Body of pancreas (tissue), 4 donors: ENCODE measurements at regions of chr2 and their contacts with region 1.

Region 1: DNA sequence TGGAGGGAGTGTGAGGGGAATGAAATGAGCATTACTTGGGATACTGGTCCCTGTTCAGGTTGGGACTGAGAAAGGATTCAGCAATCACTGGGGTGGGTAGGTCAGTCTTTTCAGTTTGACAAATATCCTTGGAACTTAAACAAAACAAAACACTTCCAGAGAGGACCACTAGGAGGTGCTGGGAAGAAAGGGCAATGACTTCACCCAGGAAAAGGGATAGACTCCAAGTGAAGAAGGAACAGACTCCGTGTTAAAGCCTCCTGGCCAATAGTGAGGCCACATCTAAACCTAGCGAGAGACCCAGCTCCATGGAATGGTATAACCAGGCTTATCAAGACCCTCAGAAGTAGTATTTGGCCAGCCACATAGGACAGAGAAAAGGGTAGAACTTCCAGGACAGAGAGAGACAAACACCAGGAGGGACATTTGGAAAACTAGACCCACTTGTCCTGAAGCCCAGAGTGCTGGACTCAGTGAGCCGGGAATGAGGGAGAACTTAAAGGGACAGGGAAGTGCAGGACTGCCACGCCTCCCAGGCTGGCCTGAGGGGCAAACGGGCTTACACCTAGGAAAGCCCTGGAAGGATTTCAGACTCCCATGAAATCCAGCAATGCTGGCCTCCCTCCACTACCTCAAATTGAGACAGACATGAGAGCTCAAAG is 19.6 kb upstream of the KCNG3 start:
- DNase-seq: peak; percentile 39 to 56 (median 49)
- ATAC-seq: peak; percentile 80
- H3K4me3 ChIP-seq: no peak overlapping the region
- H3K27ac ChIP-seq: no peak overlapping the region
- H3K4me1 ChIP-seq: no peaks in the 10 kb centered on the region
- H3K27me3 ChIP-seq: no peaks in the 10 kb centered on the region
- CTCF ChIP-seq: peak; percentile 39 to 85 (median 78)
- POLR2A ChIP-seq: no peak

Region 2: GRCh38 chr2:42663106-42663780 is 149.9 kb after region 1 on chr2:
- intact Hi-C with region 1: loop called (anchors 5 kb)
- DNase-seq: peak; percentile 66 to 79 (median 76)
- ATAC-seq: peak; percentile 88
- H3K4me3 ChIP-seq: no peak overlapping the region
- H3K27ac ChIP-seq: no peak overlapping the region
- H3K4me1 ChIP-seq: peaks cover 20% of the 10 kb centered on the region
- H3K27me3 ChIP-seq: no peaks in the 10 kb centered on the region
- CTCF ChIP-seq: peak; percentile 93 to 98 (median 96)
- POLR2A ChIP-seq: no peak